ENCODE measurements at regions of chr7 and their contacts with region 1.

Region 1: GRCh38 chr7:30717181-30717580 is 34.8 kb upstream of the INMT start:
- DNase-seq: no peak
- H3K4me3 ChIP-seq: no peak overlapping the region
- H3K27ac ChIP-seq: no peak overlapping the region
- H3K4me1 ChIP-seq: no peaks in the 10 kb centered on the region; a peak in 1 of 7 replicates
- H3K27me3 ChIP-seq: no peaks in the 10 kb centered on the region
- CTCF ChIP-seq: peak; percentile 31 to 57 (median 55); a peak in 3 of 4 replicates
- EP300 ChIP-seq: no peak
- POLR2A ChIP-seq: no peak
- RAD21 ChIP-seq: peak; percentile 51 to 66

Region 2: GRCh38 chr7:30347226-30348082 is 369.7 kb before region 1 on chr7:
- CTCF ChIA-PET with region 1: no interaction called
- POLR2A ChIA-PET with region 1: no interaction called
- DNase-seq: no peak
- H3K4me3 ChIP-seq: no peak overlapping the region
- H3K27ac ChIP-seq: no peak overlapping the region
- H3K4me1 ChIP-seq: peaks cover 0 to 17% (median 4%) of the 10 kb centered on the region in 4 experiments; a peak in 3 of 7 replicates
- H3K27me3 ChIP-seq: no peaks in the 10 kb centered on the region
- CTCF ChIP-seq: no peak
- EP300 ChIP-seq: no peak
- POLR2A ChIP-seq: no peak
- RAD21 ChIP-seq: no peak

Region 3: DNA sequence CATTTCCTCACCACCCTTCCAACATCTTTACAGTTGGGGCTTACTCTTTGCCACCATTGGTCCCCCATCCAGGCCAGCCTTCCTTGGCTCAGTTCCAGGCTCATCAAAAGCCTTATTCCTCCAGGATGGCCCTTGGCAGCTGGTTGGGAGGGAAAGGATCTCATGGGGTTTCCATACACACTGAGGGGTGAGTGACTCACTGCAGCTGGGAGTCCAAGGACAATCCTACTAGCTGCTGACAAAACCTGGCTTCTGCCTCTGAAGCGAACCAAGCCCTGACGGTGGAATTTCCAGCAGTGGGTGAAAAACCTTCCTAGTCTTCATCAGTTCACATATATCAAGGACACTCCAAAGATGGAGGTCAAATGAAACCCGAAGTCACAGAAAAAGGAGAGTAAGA is 57.9 kb before region 1 on chr7:
- CTCF ChIA-PET with region 1: interaction called, 23 read pairs
- POLR2A ChIA-PET with region 1: no interaction called
- DNase-seq: no peak
- H3K4me3 ChIP-seq: no peak overlapping the region
- H3K27ac ChIP-seq: no peak overlapping the region
- H3K4me1 ChIP-seq: no peaks in the 10 kb centered on the region; a peak in 1 of 7 replicates
- H3K27me3 ChIP-seq: no peaks in the 10 kb centered on the region; a peak in 1 of 7 replicates
- CTCF ChIP-seq: no peak
- EP300 ChIP-seq: no peak
- POLR2A ChIP-seq: no peak
- RAD21 ChIP-seq: no peak

Region 4: GRCh38 chr7:30702200-30702599 is 15.0 kb before region 1 on chr7:
- CTCF ChIA-PET with region 1: interaction called, 33 read pairs
- POLR2A ChIA-PET with region 1: interaction called, 3 read pairs
- DNase-seq: no peak
- H3K4me3 ChIP-seq: no peak overlapping the region
- H3K27ac ChIP-seq: no peak overlapping the region
- H3K4me1 ChIP-seq: peaks cover 0 to 13% (median 8%) of the 10 kb centered on the region in 4 experiments; a peak in 6 of 7 replicates
- H3K27me3 ChIP-seq: no peaks in the 10 kb centered on the region; a peak in 1 of 7 replicates
- CTCF ChIP-seq: peak; percentile 37 to 54 (median 44)
- EP300 ChIP-seq: no peak
- POLR2A ChIP-seq: no peak
- RAD21 ChIP-seq: peak; percentile 55 to 65

Region 5: DNA sequence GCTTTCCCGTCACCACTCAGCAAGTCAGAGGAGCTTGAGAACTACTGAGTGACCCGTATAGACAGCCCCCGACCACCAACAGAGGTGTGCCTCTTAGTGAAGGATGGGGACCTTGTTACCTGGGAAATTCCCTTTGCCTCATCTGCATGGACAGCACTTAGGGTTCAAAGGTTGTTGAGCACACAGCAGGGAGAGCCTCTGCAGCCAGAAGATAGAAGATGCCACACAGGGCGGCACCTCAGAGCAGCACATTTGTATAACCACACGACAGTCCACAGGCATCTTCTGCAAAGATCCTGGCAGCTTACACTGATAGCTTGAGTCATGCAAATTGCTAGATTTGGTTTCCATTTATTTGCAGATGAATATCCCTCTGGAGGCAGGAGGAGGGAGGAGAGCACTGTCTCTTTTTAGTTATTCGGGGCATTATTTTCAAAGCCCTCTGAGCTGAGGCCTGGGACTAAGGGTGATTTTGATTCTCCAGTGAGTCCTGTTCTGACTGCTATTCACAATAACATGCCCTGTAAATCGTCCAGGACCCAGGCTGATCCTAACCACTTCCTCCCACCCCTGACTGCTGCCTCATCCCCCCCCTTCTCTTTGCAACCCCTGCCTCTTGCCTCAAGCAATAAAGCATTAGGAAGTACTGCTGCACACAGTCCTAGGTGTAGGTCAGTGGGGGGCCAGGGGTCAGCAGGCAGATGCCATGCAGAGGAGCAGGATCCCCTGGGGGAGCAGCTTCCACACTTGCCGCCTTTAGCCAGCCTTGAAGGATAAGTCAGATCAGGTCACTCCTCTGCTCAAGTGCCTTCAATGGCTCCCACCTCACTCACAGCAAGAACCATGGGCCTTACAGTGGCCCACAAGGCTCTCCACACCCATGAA is 10.1 kb after region 1 on chr7:
- CTCF ChIA-PET with region 1: interaction called, 18 read pairs
- POLR2A ChIA-PET with region 1: interaction called, 3 read pairs
- DNase-seq: peak in 1 of 2 experiments; percentile 53
- H3K4me3 ChIP-seq: no peak overlapping the region
- H3K27ac ChIP-seq: peak overlapping the region; percentile 61; the same call in 1 of the 2 replicates
- H3K4me1 ChIP-seq: peaks cover 0 to 19% (median 11%) of the 10 kb centered on the region in 4 experiments; a peak in 6 of 7 replicates
- H3K27me3 ChIP-seq: no peaks in the 10 kb centered on the region; a peak in 2 of 7 replicates
- CTCF ChIP-seq: no peak
- EP300 ChIP-seq: no peak
- POLR2A ChIP-seq: no peak
- RAD21 ChIP-seq: no peak